Esophagus muscularis mucosa (tissue), 4 donors: ENCODE measurements at regions of chr5 and their contacts with region 1.

Region 1: GRCh38 chr5:112551419-112552032 is 132.4 kb upstream of the EPB41L4A start:
- DNase-seq: no peak
- H3K4me3 ChIP-seq: no peak overlapping the region
- H3K27ac ChIP-seq: no peak overlapping the region
- H3K4me1 ChIP-seq: no peaks in the 10 kb centered on the region
- H3K27me3 ChIP-seq: no peaks in the 10 kb centered on the region
- CTCF ChIP-seq: peak; percentile 69 to 83 (median 78)
- EP300 ChIP-seq: no peak
- POLR2A ChIP-seq: no peak

Region 2: GRCh38 chr5:112397690-112398089 is 153.8 kb before region 1 on chr5:
- intact Hi-C with region 1: no loop called
- DNase-seq: no peak
- H3K4me3 ChIP-seq: no peak overlapping the region
- H3K27ac ChIP-seq: no peak overlapping the region
- H3K4me1 ChIP-seq: peaks cover 0 to under 1% (median 0%) of the 10 kb centered on the region in 4 donors
- H3K27me3 ChIP-seq: no peaks in the 10 kb centered on the region
- CTCF ChIP-seq: no peak
- EP300 ChIP-seq: no peak
- POLR2A ChIP-seq: no peak

Region 3: DNA sequence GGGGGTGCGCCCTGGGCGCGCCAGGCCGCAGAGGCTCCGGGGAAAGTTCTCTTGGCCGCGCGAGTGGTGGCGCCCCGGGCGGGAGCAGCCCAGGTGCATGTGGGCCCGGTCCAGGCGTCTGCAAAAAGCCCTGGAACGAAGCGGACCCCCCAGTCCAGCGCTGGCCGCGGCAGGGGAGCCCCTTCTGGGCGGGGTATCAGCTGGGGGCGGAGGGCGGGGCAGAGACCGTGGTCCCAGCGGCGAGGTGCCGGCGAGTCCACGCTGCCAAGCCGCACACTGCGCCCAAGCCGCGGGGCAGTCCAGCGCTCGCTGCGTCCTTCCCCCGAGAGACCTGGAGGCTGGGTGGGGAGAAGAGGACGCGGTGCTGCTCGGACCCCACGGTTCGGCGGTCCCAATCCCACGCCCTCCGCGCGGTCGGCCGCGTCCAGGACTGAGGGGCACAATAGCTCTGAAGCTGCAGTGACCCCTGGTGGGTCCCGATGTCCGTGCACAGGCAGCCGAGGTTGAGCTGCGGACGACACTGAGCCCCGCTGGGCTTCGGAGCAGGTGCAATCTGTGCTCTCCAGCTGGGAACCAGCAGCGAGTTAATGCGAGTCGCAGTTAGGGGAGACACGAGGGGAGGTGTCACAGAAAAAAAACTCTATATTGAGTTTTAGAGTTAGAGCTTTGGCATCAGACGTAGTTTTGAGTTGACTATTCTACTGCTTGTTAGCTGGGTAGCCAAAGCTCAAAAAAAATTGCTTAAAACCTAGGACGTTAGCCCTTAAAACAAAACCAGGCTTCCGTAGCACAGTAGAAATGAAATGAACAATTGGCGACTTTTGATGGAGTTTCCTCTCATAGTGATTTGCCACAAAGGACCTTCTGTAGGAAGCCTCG is 131.3 kb before region 1 on chr5:
- intact Hi-C with region 1: no loop called
- DNase-seq: peak; percentile 94
- H3K4me3 ChIP-seq: peak overlapping the region; percentile 73 to 97 (median 86)
- H3K27ac ChIP-seq: peak overlapping the region; percentile 79 to 87 (median 84)
- H3K4me1 ChIP-seq: peaks cover 11 to 25% (median 14%) of the 10 kb centered on the region in 4 donors
- H3K27me3 ChIP-seq: no peaks in the 10 kb centered on the region
- CTCF ChIP-seq: peak; percentile 84 to 95 (median 92)
- EP300 ChIP-seq: no peak
- POLR2A ChIP-seq: no peak

Region 4: DNA sequence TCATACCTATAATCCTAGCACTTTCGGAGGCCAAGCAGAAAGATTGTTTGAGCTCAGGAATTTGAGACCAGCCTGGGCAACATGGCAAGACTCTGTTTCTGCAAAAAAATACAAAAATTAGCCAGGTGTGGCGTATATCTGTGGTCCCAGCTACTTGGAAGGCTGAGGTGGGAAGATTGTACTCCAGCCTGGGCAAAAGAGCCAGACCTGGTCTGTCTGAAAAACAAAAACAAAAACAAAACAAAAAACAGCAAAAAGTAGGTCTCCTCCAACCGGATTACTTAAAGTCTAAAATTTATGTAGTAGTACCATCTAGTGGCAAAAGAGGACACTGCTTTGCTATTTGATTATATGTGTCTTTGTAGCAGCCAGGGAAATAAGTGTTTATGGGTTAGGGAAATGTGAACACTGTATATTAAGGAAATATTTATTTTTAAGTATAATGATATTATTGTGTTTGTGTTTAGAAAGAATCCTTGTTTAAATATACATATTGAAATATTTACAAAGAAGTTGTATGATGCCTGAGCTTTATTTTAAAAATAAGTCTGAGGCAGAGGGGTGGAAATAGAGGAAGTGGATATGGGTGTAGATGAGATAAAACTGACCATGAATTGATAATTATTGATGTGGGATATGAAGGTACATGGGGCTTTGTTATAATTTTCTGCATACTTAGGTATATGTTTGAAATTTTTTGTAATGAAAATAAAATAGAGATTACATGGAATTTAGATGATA is 206.1 kb after region 1 on chr5:
- intact Hi-C with region 1: loop called (anchors 2 kb)
- DNase-seq: no peak
- H3K4me3 ChIP-seq: no peak overlapping the region
- H3K27ac ChIP-seq: peak overlapping the region in 1 of 4 donors; percentile 15
- H3K4me1 ChIP-seq: peaks cover 0 to 30% (median 23%) of the 10 kb centered on the region in 4 donors
- H3K27me3 ChIP-seq: no peaks in the 10 kb centered on the region
- CTCF ChIP-seq: peak; percentile 81 to 87 (median 86)
- EP300 ChIP-seq: no peak
- POLR2A ChIP-seq: no peak

Region 5: DNA sequence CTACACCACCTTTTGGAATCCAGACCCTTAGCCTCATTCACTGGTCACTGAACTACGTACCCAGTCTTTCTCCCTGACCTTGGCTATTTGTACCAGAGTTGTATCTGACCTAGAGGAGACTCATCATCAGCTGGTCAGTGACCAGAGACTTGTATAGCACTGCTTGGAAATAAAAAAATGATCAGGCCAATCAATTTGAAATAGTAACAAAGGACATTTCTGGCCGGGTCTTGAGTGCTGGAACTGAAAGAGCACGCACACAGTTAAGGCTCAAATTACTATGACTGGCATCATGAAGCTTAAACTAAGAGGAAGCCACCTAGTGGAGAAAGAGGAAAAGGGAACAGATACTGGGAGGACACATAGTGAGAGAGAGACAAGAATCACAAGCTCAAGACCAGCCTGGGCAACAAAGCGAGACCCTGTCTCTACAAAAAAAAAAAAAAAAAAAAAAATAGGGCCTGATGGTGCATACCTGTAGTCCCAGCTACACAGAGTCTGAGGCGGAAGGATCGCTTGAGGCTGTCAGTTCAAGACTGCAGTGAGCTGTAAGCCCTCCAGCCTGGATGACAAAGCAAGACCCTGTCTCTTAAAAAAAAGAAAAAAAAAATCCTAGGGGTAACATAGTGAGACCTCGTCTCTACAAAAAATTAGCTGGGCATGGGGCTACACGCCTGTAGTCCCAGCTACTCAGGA is 296.7 kb after region 1 on chr5:
- intact Hi-C with region 1: loop called (anchors 10 kb)
- DNase-seq: no peak
- H3K4me3 ChIP-seq: no peak overlapping the region
- H3K27ac ChIP-seq: no peak overlapping the region
- H3K4me1 ChIP-seq: peaks cover 0 to 4% (median 2%) of the 10 kb centered on the region in 4 donors
- H3K27me3 ChIP-seq: no peaks in the 10 kb centered on the region
- CTCF ChIP-seq: peak; percentile 47 to 61 (median 48)
- EP300 ChIP-seq: no peak
- POLR2A ChIP-seq: no peak

Region 6: GRCh38 chr5:113336975-113337374 is 785.4 kb after region 1 on chr5:
- intact Hi-C with region 1: no loop called
- DNase-seq: no peak
- H3K4me3 ChIP-seq: no peak overlapping the region
- H3K27ac ChIP-seq: no peak overlapping the region
- H3K4me1 ChIP-seq: no peaks in the 10 kb centered on the region
- H3K27me3 ChIP-seq: no peaks in the 10 kb centered on the region
- CTCF ChIP-seq: peak in 1 of 3 experiments; percentile 13
- EP300 ChIP-seq: no peak
- POLR2A ChIP-seq: no peak